Posterior cingulate gyrus (tissue), 11 donors: ENCODE measurements at regions of chr2 and their contacts with region 1.

Region 1: DNA sequence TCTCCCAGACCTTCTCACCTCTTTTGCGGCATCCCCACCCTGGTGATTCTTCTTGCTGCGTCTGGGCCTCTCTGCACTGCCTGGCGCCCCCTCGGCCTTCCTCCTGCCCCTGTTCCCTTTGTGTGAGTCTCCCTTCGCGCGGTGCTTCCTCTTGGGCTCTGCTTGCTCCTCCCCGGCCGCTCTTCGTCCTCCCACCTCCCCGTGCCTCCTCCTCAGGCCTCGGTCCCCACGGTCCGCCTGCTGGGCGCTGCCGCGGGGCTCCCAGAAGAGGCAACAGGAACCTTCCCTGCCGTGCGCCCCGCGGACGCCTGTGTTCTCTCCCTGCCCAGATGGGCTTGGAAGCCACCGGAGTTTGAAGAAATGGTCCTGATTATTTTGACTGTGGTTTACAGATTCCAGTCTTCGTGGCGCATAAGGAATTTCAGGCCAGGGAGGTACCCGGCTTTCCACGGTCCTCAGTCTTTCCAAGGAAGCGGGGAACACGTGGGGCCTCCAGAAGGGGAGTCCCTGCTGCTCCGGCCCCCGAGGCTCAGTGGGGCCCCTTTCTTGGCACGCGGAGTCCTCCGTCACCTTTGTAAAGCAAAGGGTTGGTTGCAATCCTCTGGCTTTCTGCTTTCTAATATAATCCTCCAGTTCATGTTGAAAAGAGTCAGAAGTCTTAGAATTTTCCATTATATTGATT is 13.1 kb downstream of the RNU2-63P start:
- DNase-seq: peak in 1 of 10 donors; percentile 82

Region 2: GRCh38 chr2:88038263-88039105 is 35.3 kb after region 1 on chr2:
- intact Hi-C with region 1: no loop called
- DNase-seq: no peak

Region 3: GRCh38 chr2:88049622-88050021 is 46.4 kb after region 1 on chr2:
- intact Hi-C with region 1: no loop called
- DNase-seq: no peak

Region 4: GRCh38 chr2:88159955-88160415 is 156.8 kb after region 1 on chr2:
- intact Hi-C with region 1: loop called (anchors 5 kb)
- DNase-seq: peak in 6 of 10 donors; percentile 47 to 83 (median 66)